Left cardiac atrium (tissue), 4 donors: ENCODE measurements at regions of chrX and their contacts with region 1.

Region 1: DNA sequence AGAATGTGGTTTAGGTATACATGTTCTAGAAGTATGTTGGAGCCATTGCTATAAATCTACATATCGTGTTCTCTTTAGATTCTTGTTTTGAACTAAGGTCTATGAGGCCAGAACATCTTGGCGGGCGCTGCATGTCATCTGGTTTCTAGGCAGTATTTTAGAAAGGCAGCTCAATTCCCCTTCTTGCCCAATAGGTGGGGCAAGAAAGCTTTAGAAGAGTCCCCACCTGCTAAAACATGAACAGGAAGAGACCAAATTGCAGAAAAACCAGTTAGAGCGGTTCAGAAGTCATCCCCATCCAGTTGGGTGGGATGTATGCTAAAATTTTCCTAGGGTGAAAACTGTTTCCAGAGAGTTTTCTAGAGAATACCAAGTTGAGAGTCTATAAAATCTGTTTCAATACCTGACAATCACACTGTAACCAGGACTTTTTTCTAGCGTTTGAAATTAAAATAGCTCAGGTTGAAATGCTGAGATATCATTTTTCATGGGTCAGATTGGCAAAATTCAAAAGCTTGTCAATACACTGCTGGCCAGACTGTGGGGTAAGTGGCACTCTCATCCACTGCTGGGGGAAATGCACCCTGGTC is 17.5 kb upstream of the SH3KBP1 start:
- DNase-seq: peak; percentile 26
- ATAC-seq: peak; percentile 45 to 53

Region 2: GRCh38 chrX:19987856-19988255 is 83.0 kb after region 1 on chrX:
- intact Hi-C with region 1: loop called in 1 of 2 experiments (anchors 5 kb)
- DNase-seq: no peak
- ATAC-seq: no peak

Region 3: GRCh38 chrX:20124964-20125363 is 220.1 kb after region 1 on chrX:
- intact Hi-C with region 1: loop called in 1 of 2 experiments (anchors 2 kb)
- DNase-seq: no peak
- ATAC-seq: no peak